Endothelial cell of umbilical vein (primary cell): ENCODE measurements at regions of chr2 and their contacts with region 1.

Region 1: DNA sequence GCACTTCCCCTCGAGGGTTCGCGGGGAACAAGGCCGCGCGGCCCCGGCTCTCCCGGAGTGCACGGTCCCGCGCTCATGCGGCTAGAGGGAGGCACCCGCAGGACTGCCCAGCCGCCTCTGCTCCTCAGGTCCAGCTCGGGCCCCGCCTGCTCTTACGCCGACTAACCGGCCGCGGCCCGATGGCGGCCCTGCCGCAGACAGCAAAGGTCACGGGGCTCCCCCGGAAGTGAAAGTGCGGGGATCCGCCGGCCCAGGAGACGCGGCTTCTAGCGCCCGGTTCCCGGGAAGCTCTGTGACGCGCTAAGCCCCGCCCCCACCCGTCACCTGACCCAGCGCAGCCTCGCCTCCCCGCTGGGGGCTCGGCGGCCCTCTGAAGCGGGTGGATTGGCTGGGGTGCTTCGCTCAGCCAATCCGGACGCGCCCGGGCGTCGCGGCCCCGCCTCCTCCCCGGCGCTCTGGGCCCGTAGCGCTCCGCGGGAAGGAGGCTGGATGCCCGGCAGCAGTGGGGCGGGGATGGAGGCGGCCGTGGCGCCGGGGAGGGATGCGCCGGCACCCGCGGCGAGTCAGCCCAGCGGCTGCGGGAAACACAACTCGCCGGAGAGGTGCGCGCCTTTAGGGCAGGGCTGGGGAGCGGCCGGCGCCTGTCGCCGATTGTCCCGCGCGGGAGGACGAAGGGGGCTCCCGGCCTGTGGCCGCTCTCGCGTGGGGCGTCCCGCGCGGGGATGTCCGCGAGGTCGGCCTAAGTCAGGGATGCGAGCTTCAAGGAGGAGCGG is at the start of gene SCLY:
- DNase-seq: peak; percentile 98
- H3K4me3 ChIP-seq: peak within 1 kb of the TSS; percentile 72 to 87 (median 77)
- H3K27ac ChIP-seq: peak within 1 kb of the TSS; percentile 54
- H3K4me1 ChIP-seq: peaks cover 10% of the 10 kb centered on the region
- H3K27me3 ChIP-seq: no peaks in the 10 kb centered on the region
- CTCF ChIP-seq: no peak
- POLR2A ChIP-seq: peak; percentile 68
- total RNA-seq, gene SCLY: 28.6 and 32.7 TPM in 2 replicates

Region 2: DNA sequence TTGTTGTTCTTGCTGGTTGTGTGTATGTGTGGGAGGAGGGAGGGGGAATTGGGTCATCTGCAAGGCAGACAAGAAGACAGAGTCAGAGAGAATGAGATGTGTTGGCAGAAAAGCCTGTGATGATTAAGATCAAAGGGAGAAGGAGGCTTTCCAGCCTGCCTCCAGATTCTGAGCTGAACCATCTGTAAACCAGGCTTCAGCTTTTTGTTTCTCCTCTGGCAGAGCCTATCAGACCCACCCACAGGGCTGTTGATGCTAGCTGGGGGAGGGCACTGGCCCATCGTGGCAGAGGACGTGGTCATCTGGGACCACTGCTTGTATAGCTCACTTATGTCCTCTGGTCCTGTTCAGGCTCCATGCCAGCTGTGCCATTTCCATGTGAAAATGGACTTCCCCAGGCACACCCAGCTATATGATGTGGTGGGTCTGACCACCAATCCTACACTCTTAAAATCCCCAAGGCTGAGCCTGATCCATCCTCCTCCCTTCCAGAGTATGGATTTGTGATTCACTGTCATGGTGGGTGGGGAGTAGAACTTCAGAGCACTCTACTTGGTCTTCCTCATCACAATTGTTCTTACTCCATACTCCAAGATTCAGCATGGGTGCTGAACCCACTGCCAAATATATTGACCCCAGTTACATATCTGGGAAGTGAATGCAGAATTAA is 619.0 kb before region 1 on chr2:
- CTCF ChIA-PET with region 1: no interaction called
- POLR2A ChIA-PET with region 1: no interaction called
- dilution Hi-C with region 1: no loop called
- intact Hi-C with region 1: no loop called
- DNase-seq: no peak
- H3K4me3 ChIP-seq: no peak overlapping the region
- H3K27ac ChIP-seq: no peak overlapping the region
- H3K4me1 ChIP-seq: no peaks in the 10 kb centered on the region
- H3K27me3 ChIP-seq: peaks cover 45 to 54% of the 10 kb centered on the region in 2 experiments
- CTCF ChIP-seq: no peak
- POLR2A ChIP-seq: no peak

Region 3: DNA sequence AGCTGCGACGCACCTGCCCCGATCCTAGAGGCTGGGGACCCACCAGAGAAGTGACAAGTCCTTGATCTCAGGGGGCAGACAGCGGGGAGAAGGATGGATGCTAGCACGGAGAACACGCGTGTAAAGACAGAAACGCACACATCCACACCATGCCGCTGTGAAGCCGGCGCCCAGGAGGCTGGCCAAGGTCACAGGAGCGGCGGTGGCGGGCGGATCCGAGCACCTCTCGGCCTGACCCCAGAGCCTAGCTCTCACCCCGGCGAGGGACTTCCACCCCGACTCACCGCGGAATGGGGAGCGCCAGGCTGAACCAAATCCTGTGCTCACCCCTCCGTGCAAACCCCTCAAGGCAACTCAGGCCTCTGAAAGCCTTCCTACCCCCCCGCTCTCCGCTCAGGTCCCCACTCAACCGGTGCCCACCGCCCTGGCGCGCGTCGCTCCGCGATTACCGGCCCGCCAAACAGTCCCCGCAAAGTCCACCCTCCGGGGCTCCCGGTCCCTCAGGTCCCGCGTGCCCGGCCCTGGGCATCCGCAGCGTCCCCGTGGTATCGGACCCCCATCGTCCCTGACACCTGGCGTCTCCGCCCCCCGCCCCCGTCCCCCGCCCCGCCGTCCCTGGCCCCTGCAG is 433.8 kb before region 1 on chr2:
- CTCF ChIA-PET with region 1: no interaction called
- POLR2A ChIA-PET with region 1: no interaction called
- dilution Hi-C with region 1: no loop called
- intact Hi-C with region 1: no loop called
- DNase-seq: no peak
- H3K4me3 ChIP-seq: peak overlapping the region in 1 of 3 experiments; percentile 42
- H3K27ac ChIP-seq: no peak overlapping the region
- H3K4me1 ChIP-seq: peaks cover 13% of the 10 kb centered on the region
- H3K27me3 ChIP-seq: no peaks in the 10 kb centered on the region
- CTCF ChIP-seq: no peak
- POLR2A ChIP-seq: no peak

Region 4: DNA sequence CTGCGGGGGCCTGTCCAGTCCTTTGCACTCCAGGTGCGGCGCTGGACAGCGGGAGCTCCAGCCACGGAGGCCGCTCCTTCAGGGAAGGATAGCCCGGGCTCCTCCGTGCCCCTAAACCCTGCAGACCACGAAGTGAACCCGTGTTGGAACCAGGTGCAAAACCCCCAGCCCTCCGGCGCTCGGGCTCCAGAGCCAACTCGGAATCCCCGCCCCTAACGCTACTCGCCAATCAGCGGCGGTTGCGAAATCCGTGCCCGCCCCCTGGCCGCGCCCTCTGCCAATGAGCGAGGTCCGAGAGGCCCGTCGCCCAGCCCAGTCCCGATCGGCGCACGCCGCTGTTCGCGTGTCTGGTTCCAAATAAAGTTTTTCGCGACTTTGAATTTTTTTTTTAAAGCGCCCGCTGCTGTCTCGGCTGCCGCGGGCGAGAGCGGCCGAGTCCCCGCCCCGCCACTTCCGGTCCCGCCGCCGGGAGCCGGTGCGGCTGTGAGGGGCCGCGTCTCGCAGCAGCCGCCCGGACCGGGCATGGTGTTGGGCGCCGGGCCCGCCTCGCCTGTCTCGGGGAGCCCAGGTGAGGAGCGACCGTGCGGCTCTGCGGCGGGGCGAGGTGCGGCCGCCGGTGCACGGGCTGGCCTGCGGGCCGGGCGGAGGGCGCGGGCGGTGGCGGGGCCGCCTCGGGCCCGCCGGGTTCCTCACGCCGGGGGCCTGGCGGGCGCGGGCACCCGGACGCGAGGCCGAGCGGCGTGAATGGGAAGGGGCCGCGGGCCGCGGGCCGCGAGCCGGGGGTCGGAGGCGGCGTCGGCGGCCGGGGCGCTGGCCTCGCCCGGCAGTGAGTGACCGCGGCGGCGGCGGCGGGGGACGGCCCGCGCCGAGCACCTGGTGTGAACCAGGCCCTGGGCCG is 93.9 kb before region 1 on chr2 and contains the start of gene UBE2F:
- CTCF ChIA-PET with region 1: no interaction called
- POLR2A ChIA-PET with region 1: no interaction called
- dilution Hi-C with region 1: no loop called
- intact Hi-C with region 1: loop called (anchors 1 kb)
- DNase-seq: peak; percentile 96
- H3K4me3 ChIP-seq: peak within 1 kb of the TSS; percentile 40 to 65 (median 63)
- H3K27ac ChIP-seq: no peak within 1 kb of the TSS
- H3K4me1 ChIP-seq: peaks cover 10% of the 10 kb centered on the region
- H3K27me3 ChIP-seq: no peaks in the 10 kb centered on the region
- CTCF ChIP-seq: no peak
- POLR2A ChIP-seq: peak; percentile 73
- total RNA-seq, gene UBE2F: 42.3 and 47.4 TPM in 2 replicates

Region 5: DNA sequence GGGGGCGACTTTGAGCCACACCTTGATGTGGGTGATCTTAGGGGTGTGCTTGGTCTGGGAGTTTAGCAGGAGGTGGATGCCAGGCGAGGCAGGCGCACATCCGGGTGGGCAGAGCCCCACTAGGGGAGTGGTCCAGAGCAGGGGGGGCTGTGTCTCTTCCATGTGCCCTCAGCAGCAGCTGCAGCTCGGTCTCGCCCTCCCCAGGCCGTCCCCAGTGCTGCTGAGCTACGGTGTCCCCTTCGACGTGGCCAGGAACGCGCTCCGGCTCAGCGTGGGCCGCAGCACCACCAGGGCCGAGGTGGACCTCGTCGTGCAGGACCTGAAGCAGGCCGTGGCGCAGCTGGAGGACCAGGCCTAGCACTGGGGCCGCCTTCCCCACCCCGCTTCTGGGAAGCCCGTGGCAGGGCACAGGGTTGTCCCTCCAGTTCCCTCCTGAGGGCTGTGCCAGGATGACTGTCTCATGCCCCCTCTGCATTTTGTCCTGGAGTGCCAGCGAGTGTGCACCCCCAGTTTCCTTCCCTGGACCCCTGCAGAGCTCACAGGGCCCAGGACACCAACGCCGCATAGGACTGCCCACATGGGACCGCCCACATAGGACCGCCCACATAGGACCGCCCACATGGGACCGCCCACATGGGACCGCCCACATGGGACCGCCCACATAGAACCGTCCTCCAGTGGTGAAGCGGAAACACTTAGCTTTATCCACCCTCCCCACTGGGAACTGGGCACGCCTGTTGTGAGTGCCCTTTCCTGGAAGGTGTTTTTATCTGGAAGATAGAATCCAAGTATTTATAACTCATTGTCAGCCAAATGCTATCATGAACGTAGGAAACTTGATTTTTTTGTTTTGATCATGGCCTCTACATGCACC is 37.5 kb after region 1 on chr2:
- CTCF ChIA-PET with region 1: no interaction called
- POLR2A ChIA-PET with region 1: no interaction called
- dilution Hi-C with region 1: no loop called
- intact Hi-C with region 1: loop called (anchors 1 kb)
- DNase-seq: peak; percentile 79
- H3K4me3 ChIP-seq: no peak overlapping the region
- H3K27ac ChIP-seq: no peak overlapping the region
- H3K4me1 ChIP-seq: no peaks in the 10 kb centered on the region
- H3K27me3 ChIP-seq: no peaks in the 10 kb centered on the region
- CTCF ChIP-seq: no peak
- POLR2A ChIP-seq: peak; percentile 16

Region 6: GRCh38 chr2:238187618-238188548 is 127.2 kb after region 1 on chr2:
- CTCF ChIA-PET with region 1: no interaction called
- POLR2A ChIA-PET with region 1: no interaction called
- dilution Hi-C with region 1: no loop called
- intact Hi-C with region 1: no loop called
- DNase-seq: no peak
- H3K4me3 ChIP-seq: no peak overlapping the region
- H3K27ac ChIP-seq: no peak overlapping the region
- H3K4me1 ChIP-seq: no peaks in the 10 kb centered on the region
- H3K27me3 ChIP-seq: no peaks in the 10 kb centered on the region
- CTCF ChIP-seq: no peak
- POLR2A ChIP-seq: no peak

Region 7: GRCh38 chr2:238308177-238308576 is 247.4 kb after region 1 on chr2:
- CTCF ChIA-PET with region 1: no interaction called
- POLR2A ChIA-PET with region 1: no interaction called
- dilution Hi-C with region 1: no loop called
- intact Hi-C with region 1: no loop called
- DNase-seq: no peak
- H3K4me3 ChIP-seq: no peak overlapping the region
- H3K27ac ChIP-seq: no peak overlapping the region
- H3K4me1 ChIP-seq: no peaks in the 10 kb centered on the region
- H3K27me3 ChIP-seq: no peaks in the 10 kb centered on the region
- CTCF ChIP-seq: peak in 1 of 2 donors; percentile 18
- POLR2A ChIP-seq: no peak